ENCODE measurements at regions of chr1 and their contacts with region 1.

Region 1: DNA sequence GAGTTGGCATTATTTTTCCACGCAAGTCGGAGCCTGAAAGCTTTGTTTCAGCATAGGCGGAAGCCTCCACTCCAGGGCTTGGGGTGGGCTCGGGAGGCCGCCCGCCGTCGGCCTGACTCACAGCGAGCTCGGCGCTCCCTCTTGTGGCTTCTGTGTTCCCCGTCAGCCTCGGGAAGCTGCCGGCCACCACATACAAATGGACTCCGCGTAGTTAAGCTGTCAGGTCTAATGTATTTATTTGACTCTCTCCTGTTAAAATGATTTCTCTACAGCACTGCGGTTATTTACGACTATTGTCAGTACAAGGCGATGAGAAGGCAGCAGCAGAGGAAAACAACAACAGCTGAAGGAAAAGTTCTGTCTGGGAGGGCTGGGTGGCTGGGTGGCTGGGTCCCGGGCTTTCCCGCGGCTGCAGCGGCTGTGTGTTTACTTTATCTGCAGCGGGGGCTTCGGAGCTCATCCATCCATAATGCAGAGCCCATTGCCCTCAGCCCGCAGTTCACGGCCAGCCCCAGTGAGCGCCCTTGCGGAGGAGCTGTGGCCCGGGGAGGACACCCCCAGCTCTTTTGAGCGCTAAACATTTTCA is 375.7 kb upstream of the CAMK1G start:
- DNase-seq: peak; percentile 39
- H3K4me3 Mint-ChIP-seq: no peak overlapping the region
- H3K27ac Mint-ChIP-seq: no peak overlapping the region
- H3K4me1 Mint-ChIP-seq: peaks cover 5% of the 10 kb centered on the region
- H3K27me3 Mint-ChIP-seq: peaks cover 28% of the 10 kb centered on the region

Region 2: DNA sequence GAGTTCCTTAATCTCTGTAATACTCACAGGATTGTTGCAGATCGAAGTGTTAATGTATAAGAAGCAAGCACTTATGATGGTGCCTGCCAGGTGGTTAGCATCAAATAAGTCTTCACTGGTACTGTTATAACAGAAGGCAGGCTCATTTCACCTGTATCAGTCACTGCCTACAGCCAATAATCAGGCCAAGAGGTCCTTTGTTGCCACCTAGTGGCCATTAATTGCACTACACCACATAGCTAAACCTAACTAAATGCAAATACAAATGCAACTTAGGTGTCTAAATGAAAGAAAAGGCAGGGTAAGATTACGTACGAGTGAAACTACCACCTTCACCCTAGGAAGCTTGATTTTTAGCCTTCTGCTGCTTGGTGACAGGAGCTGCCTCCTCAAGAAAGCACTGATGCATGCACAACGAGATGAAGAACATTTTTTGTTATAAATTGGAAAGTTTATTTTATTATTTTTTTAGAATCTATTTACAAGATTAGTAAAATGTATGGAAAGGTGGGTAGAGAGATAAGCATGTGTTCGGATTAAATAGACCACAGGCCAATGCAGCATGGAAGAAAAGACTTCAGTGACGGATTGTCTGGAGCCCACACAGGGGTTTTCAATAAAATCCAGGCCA is 41.0 kb after region 1 on chr1:
- CTCF ChIA-PET with region 1: interaction called, 29 read pairs
- POLR2A ChIA-PET with region 1: no interaction called
- intact Hi-C with region 1: no loop called
- DNase-seq: peak; percentile 46
- H3K4me3 Mint-ChIP-seq: no peak overlapping the region
- H3K27ac Mint-ChIP-seq: no peak overlapping the region
- H3K4me1 Mint-ChIP-seq: no peaks in the 10 kb centered on the region
- H3K27me3 Mint-ChIP-seq: no peaks in the 10 kb centered on the region

Region 3: GRCh38 chr1:209354111-209354839 is 146.5 kb after region 1 on chr1:
- CTCF ChIA-PET with region 1: interaction called, 4 read pairs
- POLR2A ChIA-PET with region 1: no interaction called
- intact Hi-C with region 1: loop called (anchors 1 kb)
- DNase-seq: peak; percentile 60
- H3K4me3 Mint-ChIP-seq: no peak overlapping the region
- H3K27ac Mint-ChIP-seq: no peak overlapping the region
- H3K4me1 Mint-ChIP-seq: no peaks in the 10 kb centered on the region
- H3K27me3 Mint-ChIP-seq: no peaks in the 10 kb centered on the region

Measured in activated CD4-positive, alpha-beta memory T cell treated with anti-CD3 and anti-CD28 coated beads for 36 hours (primary cell).